ENCODE measurements at regions of chr1 and their contacts with region 1.

Region 1: DNA sequence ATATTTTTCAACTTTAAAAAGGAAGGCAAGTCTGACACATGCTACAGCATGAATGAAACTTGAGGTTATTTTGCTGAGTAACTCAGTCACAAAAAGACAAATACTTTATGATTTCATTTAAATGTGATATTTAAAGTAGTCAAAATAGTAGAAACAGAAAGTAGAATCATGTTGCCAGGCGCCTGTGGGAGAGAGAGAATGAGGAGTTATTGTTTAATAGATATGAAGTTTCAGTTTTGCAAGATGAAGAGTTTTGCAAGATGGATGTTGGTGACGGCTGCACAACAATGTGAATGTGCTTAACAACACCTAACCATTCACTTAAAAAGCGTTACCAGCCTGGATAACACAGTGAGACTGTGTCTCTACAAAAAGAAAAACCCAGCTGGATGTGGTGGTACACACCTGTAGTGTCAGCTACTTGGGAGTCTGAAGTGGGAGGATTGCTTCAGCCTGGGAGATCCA is 20.7 kb upstream of the ATP1A1 start:
- DNase-seq: no peak
- ATAC-seq: peak in 3 of 4 experiments; percentile 35 to 54 (median 39)
- H3K4me3 ChIP-seq: no peak overlapping the region
- H3K4me3 Mint-ChIP-seq: peak overlapping the region; percentile 19 to 67 (median 47)
- H3K27ac ChIP-seq: no peak overlapping the region
- H3K27ac Mint-ChIP-seq: peak overlapping the region; percentile 71 to 76
- H3K4me1 ChIP-seq: peaks cover 12 to 13% of the 10 kb centered on the region in 2 experiments
- H3K4me1 Mint-ChIP-seq: peaks cover 43 to 66% (median 55%) of the 10 kb centered on the region in 3 donors
- H3K27me3 ChIP-seq: no peaks in the 10 kb centered on the region
- H3K27me3 Mint-ChIP-seq: no peaks in the 10 kb centered on the region

Region 2: GRCh38 chr1:116243333-116244054 is 108.9 kb before region 1 on chr1:
- CTCF ChIA-PET with region 1: no interaction called
- POLR2A ChIA-PET with region 1: no interaction called
- DNase-seq: no peak
- ATAC-seq: peak in 2 of 4 experiments; percentile 27 to 50
- H3K4me3 ChIP-seq: no peak overlapping the region
- H3K4me3 Mint-ChIP-seq: peak overlapping the region in 1 of 3 donors; percentile 28
- H3K27ac ChIP-seq: no peak overlapping the region
- H3K27ac Mint-ChIP-seq: peak overlapping the region in 1 of 2 donors; percentile 81
- H3K4me1 ChIP-seq: peaks cover 0 to 5% of the 10 kb centered on the region in 2 experiments
- H3K4me1 Mint-ChIP-seq: peaks cover 11 to 31% (median 20%) of the 10 kb centered on the region in 3 donors
- H3K27me3 ChIP-seq: no peaks in the 10 kb centered on the region
- H3K27me3 Mint-ChIP-seq: no peaks in the 10 kb centered on the region

Region 3: DNA sequence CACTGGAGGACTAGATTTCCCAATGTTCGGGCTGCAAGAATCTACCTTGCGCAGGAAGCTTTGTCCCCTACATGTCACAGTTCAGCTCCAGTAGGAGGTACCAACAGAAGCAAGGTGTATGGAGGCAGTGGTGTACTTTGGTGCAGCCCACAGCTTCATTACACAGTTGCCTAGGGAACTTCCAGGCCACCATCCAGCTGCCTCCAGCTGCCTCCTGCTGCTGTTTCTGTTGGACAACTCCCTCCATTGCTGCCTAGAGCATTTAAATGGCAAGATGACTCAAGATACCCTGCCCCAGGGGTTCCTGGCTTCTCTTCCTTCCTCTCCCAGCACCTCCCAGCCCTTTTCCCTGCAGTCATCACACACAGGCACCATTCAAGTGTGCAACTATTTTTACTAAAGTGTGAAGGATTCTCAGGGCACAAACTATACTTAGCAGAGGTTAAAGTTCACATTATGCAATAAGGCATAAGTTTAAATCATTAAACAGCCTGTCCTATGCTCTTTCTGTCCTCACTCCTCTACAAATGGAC is 18.3 kb before region 1 on chr1:
- CTCF ChIA-PET with region 1: no interaction called
- POLR2A ChIA-PET with region 1: no interaction called
- DNase-seq: no peak
- ATAC-seq: no peak
- H3K4me3 ChIP-seq: no peak overlapping the region
- H3K4me3 Mint-ChIP-seq: no peak overlapping the region
- H3K27ac ChIP-seq: no peak overlapping the region
- H3K27ac Mint-ChIP-seq: no peak overlapping the region
- H3K4me1 ChIP-seq: peaks cover 6 to 9% of the 10 kb centered on the region in 2 experiments
- H3K4me1 Mint-ChIP-seq: peaks cover 39 to 67% (median 53%) of the 10 kb centered on the region in 3 donors
- H3K27me3 ChIP-seq: no peaks in the 10 kb centered on the region
- H3K27me3 Mint-ChIP-seq: peaks cover 0 to 3% of the 10 kb centered on the region in 2 donors

Region 4: DNA sequence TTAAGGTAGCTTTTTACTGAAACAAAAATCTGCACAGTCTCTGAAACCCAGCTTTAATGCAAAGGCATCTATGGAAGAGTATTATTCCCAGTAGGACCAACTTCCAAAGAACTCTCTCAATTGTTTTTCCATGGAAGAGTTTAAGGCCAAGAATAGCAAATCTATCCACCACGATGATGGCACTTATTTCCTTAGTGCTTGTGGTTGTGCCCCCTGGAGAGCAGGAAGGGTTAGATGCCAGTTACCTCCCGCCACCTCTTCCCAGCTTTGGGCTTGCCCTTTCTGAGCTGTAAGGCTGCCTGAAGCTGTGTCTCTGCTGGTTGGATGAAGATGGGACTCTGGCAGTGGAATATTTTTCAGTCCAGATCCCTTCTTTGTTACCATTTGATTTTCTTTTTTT is 15.9 kb after region 1 on chr1:
- CTCF ChIA-PET with region 1: interaction called, 3 read pairs
- POLR2A ChIA-PET with region 1: interaction called in 1 of 2 experiments, 10 read pairs
- DNase-seq: no peak
- ATAC-seq: no peak
- H3K4me3 ChIP-seq: no peak overlapping the region
- H3K4me3 Mint-ChIP-seq: no peak overlapping the region
- H3K27ac ChIP-seq: peak overlapping the region; percentile 40
- H3K27ac Mint-ChIP-seq: peak overlapping the region in 1 of 2 donors; percentile 7
- H3K4me1 ChIP-seq: peaks cover 3 to 10% of the 10 kb centered on the region in 2 experiments
- H3K4me1 Mint-ChIP-seq: peaks cover 19 to 22% (median 22%) of the 10 kb centered on the region in 3 donors
- H3K27me3 ChIP-seq: no peaks in the 10 kb centered on the region
- H3K27me3 Mint-ChIP-seq: peaks cover 0 to 5% of the 10 kb centered on the region in 2 donors

Region 5: GRCh38 chr1:116556289-116557006 is 204.1 kb after region 1 on chr1:
- CTCF ChIA-PET with region 1: no interaction called
- POLR2A ChIA-PET with region 1: no interaction called
- DNase-seq: peak; percentile 19 to 81 (median 52)
- ATAC-seq: peak; percentile 79 to 97 (median 88)
- H3K4me3 ChIP-seq: no peak overlapping the region
- H3K4me3 Mint-ChIP-seq: peak overlapping the region in 1 of 3 donors; percentile 2
- H3K27ac ChIP-seq: peak overlapping the region; percentile 87
- H3K27ac Mint-ChIP-seq: peak overlapping the region; percentile 81 to 91
- H3K4me1 ChIP-seq: peaks cover 0 to 40% of the 10 kb centered on the region in 2 experiments
- H3K4me1 Mint-ChIP-seq: peaks cover 31 to 77% (median 64%) of the 10 kb centered on the region in 3 donors
- H3K27me3 ChIP-seq: no peaks in the 10 kb centered on the region
- H3K27me3 Mint-ChIP-seq: peaks cover 0 to 4% of the 10 kb centered on the region in 2 donors

Measured in T-cell (primary cell).